SK-N-SH (cell line): ENCODE measurements at regions of chr17 and their contacts with region 1.

Region 1: GRCh38 chr17:44533533-44534246 is 23.6 kb upstream of the FZD2 start:
- DNase-seq: peak; percentile 94
- H3K4me3 ChIP-seq: no peak overlapping the region; a peak in 1 of 4 replicates
- H3K27ac ChIP-seq: 0 out of 4 replicates have a peak overlapping the region, but pooled peaks of 1 of the 2 experiments have one; percentile 4
- H3K4me1 ChIP-seq: peaks cover 6 to 7% of the 10 kb centered on the region in 2 experiments; a peak in 1 of 4 replicates
- H3K27me3 ChIP-seq: no peaks in the 10 kb centered on the region
- CTCF ChIP-seq: peak; percentile 96
- EP300 ChIP-seq: no peak
- RAD21 ChIP-seq: peak; percentile 96

Region 2: DNA sequence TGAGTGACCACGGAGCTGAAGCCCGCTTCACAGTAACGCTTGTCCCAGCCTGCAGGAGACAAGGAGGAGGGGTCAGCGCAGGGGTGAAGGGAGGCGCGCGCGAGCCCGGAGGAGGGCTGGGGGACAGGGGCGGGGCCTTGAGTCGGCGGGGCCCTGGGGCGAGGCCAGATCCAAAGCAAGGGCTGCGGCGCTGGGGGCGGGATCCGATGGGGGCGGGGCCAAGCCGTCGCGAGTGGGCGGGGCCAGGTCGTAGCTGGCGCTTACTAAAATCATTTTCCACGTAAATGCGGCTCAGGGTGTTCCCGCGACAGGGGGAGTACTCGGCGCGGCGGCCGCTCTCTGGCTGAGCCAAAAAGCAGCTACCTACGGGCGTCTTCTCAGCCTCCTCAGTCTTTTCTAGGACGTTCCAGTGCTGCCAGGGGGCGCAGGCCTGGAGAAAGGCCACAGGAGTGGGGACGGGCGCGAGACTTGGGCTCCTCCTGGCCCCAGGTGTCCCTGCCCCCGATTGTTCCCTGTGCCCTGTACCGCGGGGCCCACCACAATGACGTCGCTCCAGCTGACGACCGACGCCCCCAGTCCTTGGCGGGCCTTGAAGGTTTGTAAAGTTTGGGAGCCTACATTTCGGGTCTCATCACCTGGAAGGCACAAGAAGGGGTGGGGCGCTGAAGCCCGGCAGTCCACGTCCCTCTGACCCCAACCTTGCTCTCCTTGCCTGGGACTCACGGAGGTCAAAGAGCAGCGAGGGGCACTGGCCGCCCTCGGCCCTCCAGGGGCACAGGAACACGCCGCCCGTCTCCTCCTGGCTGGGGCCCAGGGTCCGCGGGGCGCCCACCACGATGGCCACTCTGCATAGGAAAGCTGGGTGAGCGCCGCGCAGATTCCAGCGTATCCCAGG is 148.2 kb before region 1 on chr17:
- CTCF ChIA-PET with region 1: no interaction called
- POLR2A ChIA-PET with region 1: no interaction called
- DNase-seq: peak; percentile 97
- H3K4me3 ChIP-seq: peak overlapping the region; percentile 58 to 71
- H3K27ac ChIP-seq: no peak overlapping the region
- H3K4me1 ChIP-seq: peaks cover 0 to 13% of the 10 kb centered on the region in 2 experiments; a peak in 1 of 4 replicates
- H3K27me3 ChIP-seq: no peaks in the 10 kb centered on the region
- CTCF ChIP-seq: peak; percentile 36; the same call in 1 of the 2 replicates
- EP300 ChIP-seq: no peak
- RAD21 ChIP-seq: 0 out of 2 replicates have a peak, but pooled peaks have one; percentile 5

Region 3: DNA sequence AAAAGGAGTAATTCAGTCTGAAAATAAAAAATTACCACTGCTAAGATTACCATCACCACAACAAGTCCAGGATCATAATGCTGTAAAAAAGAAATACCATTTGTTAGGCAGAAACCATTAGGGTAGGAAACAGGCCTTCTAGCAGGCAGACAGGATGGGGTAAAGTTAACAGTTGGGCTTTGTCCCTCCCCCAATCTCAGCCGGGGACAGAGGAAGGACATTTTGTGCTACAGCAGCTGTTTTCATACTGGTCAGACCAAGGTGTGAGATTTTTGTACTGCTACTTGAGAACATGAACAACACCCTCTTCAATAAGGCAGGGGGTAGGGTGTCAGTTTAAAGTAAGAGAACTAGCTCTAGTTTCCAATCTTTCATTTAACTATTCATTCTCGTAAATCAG is 95.1 kb before region 1 on chr17:
- CTCF ChIA-PET with region 1: no interaction called
- POLR2A ChIA-PET with region 1: no interaction called
- DNase-seq: peak; percentile 8
- H3K4me3 ChIP-seq: no peak overlapping the region
- H3K27ac ChIP-seq: no peak overlapping the region; a peak in 1 of 4 replicates
- H3K4me1 ChIP-seq: peaks cover 0 to 3% of the 10 kb centered on the region in 2 experiments; a peak in 1 of 4 replicates
- H3K27me3 ChIP-seq: no peaks in the 10 kb centered on the region
- CTCF ChIP-seq: no peak
- EP300 ChIP-seq: no peak
- RAD21 ChIP-seq: no peak

Region 4: GRCh38 chr17:44556832-44557606 is 23.3 kb after region 1 on chr17 and contains the start of gene FZD2:
- CTCF ChIA-PET with region 1: interaction called, 23 read pairs
- POLR2A ChIA-PET with region 1: interaction called, 3 read pairs
- DNase-seq: peak; percentile 95
- H3K4me3 ChIP-seq: peak within 1 kb of the TSS; percentile 72 to 83
- H3K27ac ChIP-seq: peak within 1 kb of the TSS; percentile 92 to 96
- H3K4me1 ChIP-seq: peaks cover 11 to 41% of the 10 kb centered on the region in 2 experiments; a peak in 3 of 4 replicates
- H3K27me3 ChIP-seq: no peaks in the 10 kb centered on the region
- CTCF ChIP-seq: no peak
- EP300 ChIP-seq: peak in 1 of 2 experiments; percentile 27; a peak in 1 of 4 replicates
- RAD21 ChIP-seq: no peak
- polyA plus RNA-seq, gene FZD2: 28.9 and 35.1 TPM in 2 replicates

Region 5: DNA sequence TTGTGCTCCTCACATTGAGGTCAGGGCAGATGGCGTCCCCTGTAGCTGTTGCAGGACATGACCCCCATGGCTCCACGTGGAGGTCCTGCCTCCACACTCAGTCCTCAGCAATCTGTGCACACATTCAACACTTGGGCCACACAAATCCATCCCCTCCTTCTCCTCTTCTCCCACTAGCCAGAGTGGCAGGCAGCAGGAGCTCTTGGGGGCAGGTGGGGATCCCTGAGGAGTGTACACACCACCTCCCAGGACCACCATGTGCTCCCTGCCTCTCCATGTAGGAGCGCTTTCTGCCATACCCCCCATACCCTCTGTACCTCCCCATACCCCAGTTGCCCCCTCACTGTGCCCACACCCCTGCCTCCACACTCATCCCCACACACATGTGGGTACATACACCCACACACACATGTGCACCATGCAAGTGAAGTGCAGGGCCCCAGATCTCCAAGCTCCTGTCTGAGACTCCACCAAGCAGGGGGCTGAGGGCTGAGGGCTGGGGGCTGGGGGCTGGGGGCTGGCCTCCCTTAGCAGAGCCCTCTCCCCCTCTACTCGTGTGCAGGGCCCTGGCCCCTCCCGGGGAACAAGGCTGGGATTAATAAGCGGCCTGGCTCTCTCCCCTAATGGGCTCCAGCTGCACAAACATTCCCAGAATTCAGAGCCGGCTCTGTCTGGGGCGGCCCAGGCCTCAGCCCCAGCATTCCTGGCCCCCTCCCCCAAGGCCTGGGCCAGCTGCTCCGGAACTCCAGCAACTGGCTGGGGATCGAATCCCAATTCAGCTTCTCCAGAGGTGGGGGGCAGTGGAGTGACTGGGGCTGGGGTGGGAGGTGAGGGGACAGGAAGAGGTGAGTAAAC is 74.4 kb after region 1 on chr17:
- CTCF ChIA-PET with region 1: interaction called, 14 read pairs
- POLR2A ChIA-PET with region 1: no interaction called
- DNase-seq: peak; percentile 89
- H3K4me3 ChIP-seq: no peak overlapping the region
- H3K27ac ChIP-seq: peak overlapping the region; percentile 69 to 93; a peak in 3 of 4 replicates
- H3K4me1 ChIP-seq: peaks cover 20 to 30% of the 10 kb centered on the region in 2 experiments
- H3K27me3 ChIP-seq: no peaks in the 10 kb centered on the region
- CTCF ChIP-seq: no peak
- EP300 ChIP-seq: peak in 1 of 2 experiments; percentile 86; a peak in 1 of 4 replicates
- RAD21 ChIP-seq: no peak

Region 6: GRCh38 chr17:44636562-44636961 is 102.9 kb after region 1 on chr17:
- CTCF ChIA-PET with region 1: interaction called, 56 read pairs
- POLR2A ChIA-PET with region 1: no interaction called
- DNase-seq: peak; percentile 58
- H3K4me3 ChIP-seq: no peak overlapping the region
- H3K27ac ChIP-seq: no peak overlapping the region
- H3K4me1 ChIP-seq: no peaks in the 10 kb centered on the region
- H3K27me3 ChIP-seq: no peaks in the 10 kb centered on the region
- CTCF ChIP-seq: peak; percentile 73
- EP300 ChIP-seq: no peak
- RAD21 ChIP-seq: peak; percentile 91

Region 7: GRCh38 chr17:44666006-44666405 is 132.3 kb after region 1 on chr17:
- CTCF ChIA-PET with region 1: interaction called, 24 read pairs
- POLR2A ChIA-PET with region 1: no interaction called
- DNase-seq: no peak
- H3K4me3 ChIP-seq: no peak overlapping the region
- H3K27ac ChIP-seq: no peak overlapping the region
- H3K4me1 ChIP-seq: peaks cover 0 to 7% of the 10 kb centered on the region in 2 experiments; a peak in 1 of 4 replicates
- H3K27me3 ChIP-seq: no peaks in the 10 kb centered on the region
- CTCF ChIP-seq: no peak
- EP300 ChIP-seq: no peak
- RAD21 ChIP-seq: no peak